ENCODE measurements at regions of chr1 and their contacts with region 1.

Region 1: GRCh38 chr1:193143285-193143684 is 21.5 kb downstream of the CDC73 start:
- DNase-seq: no peak
- H3K4me3 ChIP-seq: no peak overlapping the region
- H3K27ac ChIP-seq: no peak overlapping the region
- H3K27me3 ChIP-seq: no peaks in the 10 kb centered on the region
- CTCF ChIP-seq: peak; percentile 38

Region 2: GRCh38 chr1:193069748-193070385 is 73.4 kb before region 1 on chr1:
- CTCF ChIA-PET with region 1: interaction called, 10 read pairs
- POLR2A ChIA-PET with region 1: no interaction called
- DNase-seq: no peak
- H3K4me3 ChIP-seq: no peak overlapping the region
- H3K27ac ChIP-seq: no peak overlapping the region
- H3K27me3 ChIP-seq: no peaks in the 10 kb centered on the region
- CTCF ChIP-seq: peak; percentile 38

Measured in AG04450 (cell line).